ENCODE measurements at regions of chr16 and their contacts with region 1.

Region 1: GRCh38 chr16:87636072-87636684 is 33.9 kb downstream of the JPH3 start:
- DNase-seq: peak; percentile 87 to 98
- ATAC-seq: peak; percentile 90 to 95
- H3K4me3 ChIP-seq: peak overlapping the region; percentile 53
- H3K27ac ChIP-seq: peak overlapping the region; percentile 75 to 85
- H3K4me1 ChIP-seq: 0 out of 3 replicates have a peak, but pooled peaks cover 7% of the 10 kb centered on the region
- CTCF ChIP-seq: peak; percentile 84
- EP300 ChIP-seq: no peak
- POLR2A ChIP-seq: peak; percentile 32
- RAD21 ChIP-seq: peak; percentile 91 to 95

Region 2: DNA sequence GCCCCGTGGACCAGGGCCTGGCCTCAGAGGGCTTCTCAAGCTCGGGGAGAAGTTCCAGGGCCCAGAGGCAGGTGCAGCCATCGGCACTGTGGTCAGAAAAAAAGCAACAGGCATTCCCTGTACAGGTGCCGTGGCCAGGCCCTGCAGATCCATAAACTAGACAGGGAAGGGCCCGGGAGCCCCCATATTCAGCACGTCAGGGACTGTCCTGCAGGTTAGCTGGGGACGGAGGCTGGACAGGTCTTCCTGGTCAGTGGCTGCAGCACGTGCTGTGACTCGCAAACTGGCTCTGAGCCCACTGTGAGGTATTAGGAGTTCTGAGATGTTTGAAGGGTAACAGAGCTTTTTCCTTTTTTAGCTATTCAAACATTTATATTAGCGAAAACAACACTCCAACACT is 304.0 kb before region 1 on chr16:
- CTCF ChIA-PET with region 1: interaction called, 16 read pairs
- POLR2A ChIA-PET with region 1: no interaction called
- DNase-seq: no peak
- ATAC-seq: no peak
- H3K4me3 ChIP-seq: no peak overlapping the region
- H3K27ac ChIP-seq: no peak overlapping the region
- H3K4me1 ChIP-seq: no peaks in the 10 kb centered on the region
- CTCF ChIP-seq: no peak
- EP300 ChIP-seq: no peak
- POLR2A ChIP-seq: no peak
- RAD21 ChIP-seq: no peak

Region 3: GRCh38 chr16:87426423-87427215 is 209.6 kb before region 1 on chr16:
- CTCF ChIA-PET with region 1: interaction called, 153 read pairs
- POLR2A ChIA-PET with region 1: no interaction called
- DNase-seq: no peak
- ATAC-seq: no peak
- H3K4me3 ChIP-seq: no peak overlapping the region
- H3K27ac ChIP-seq: no peak overlapping the region
- H3K4me1 ChIP-seq: no peaks in the 10 kb centered on the region
- CTCF ChIP-seq: no peak
- EP300 ChIP-seq: no peak
- POLR2A ChIP-seq: no peak
- RAD21 ChIP-seq: no peak

Region 4: GRCh38 chr16:87515475-87516330 is 120.5 kb before region 1 on chr16:
- CTCF ChIA-PET with region 1: interaction called, 17 read pairs
- POLR2A ChIA-PET with region 1: no interaction called
- DNase-seq: no peak
- ATAC-seq: no peak
- H3K4me3 ChIP-seq: no peak overlapping the region
- H3K27ac ChIP-seq: no peak overlapping the region
- H3K4me1 ChIP-seq: no peaks in the 10 kb centered on the region
- CTCF ChIP-seq: no peak
- EP300 ChIP-seq: no peak
- POLR2A ChIP-seq: no peak
- RAD21 ChIP-seq: no peak

Region 5: GRCh38 chr16:87571136-87571867 is 64.9 kb before region 1 on chr16:
- CTCF ChIA-PET with region 1: interaction called, 65 read pairs
- POLR2A ChIA-PET with region 1: no interaction called
- DNase-seq: peak; percentile 76 to 84
- ATAC-seq: peak; percentile 95 to 96
- H3K4me3 ChIP-seq: no peak overlapping the region
- H3K27ac ChIP-seq: peak overlapping the region in 1 of 2 experiments; percentile 49; a peak in 3 of 6 replicates
- H3K4me1 ChIP-seq: peaks cover 14% of the 10 kb centered on the region
- CTCF ChIP-seq: peak; percentile 42; the same call in 2 of the 3 replicates
- EP300 ChIP-seq: no peak
- POLR2A ChIP-seq: no peak
- RAD21 ChIP-seq: peak; percentile 61 to 62

Region 6: GRCh38 chr16:87621976-87622713 is 14.0 kb before region 1 on chr16:
- CTCF ChIA-PET with region 1: interaction called, 110 read pairs
- POLR2A ChIA-PET with region 1: no interaction called
- DNase-seq: no peak
- ATAC-seq: peak in 1 of 2 experiments; percentile 23; a peak in 3 of 6 replicates
- H3K4me3 ChIP-seq: no peak overlapping the region
- H3K27ac ChIP-seq: no peak overlapping the region
- H3K4me1 ChIP-seq: no peaks in the 10 kb centered on the region
- CTCF ChIP-seq: no peak
- EP300 ChIP-seq: no peak
- POLR2A ChIP-seq: no peak
- RAD21 ChIP-seq: no peak